ENCODE measurements at regions of chr16 and their contacts with region 1.

Region 1: GRCh38 chr16:82263521-82264143 is 93.6 kb upstream of the MPHOSPH6 start:
- DNase-seq: peak in 1 of 2 experiments; percentile 68
- H3K4me3 ChIP-seq: no peak overlapping the region
- H3K27ac ChIP-seq: no peak overlapping the region
- H3K4me1 ChIP-seq: no peaks in the 10 kb centered on the region
- H3K27me3 ChIP-seq: no peaks in the 10 kb centered on the region
- CTCF ChIP-seq: peak; percentile 81 to 93 (median 87)
- EP300 ChIP-seq: no peak
- POLR2A ChIP-seq: no peak
- RAD21 ChIP-seq: peak; percentile 96 to 97

Region 2: DNA sequence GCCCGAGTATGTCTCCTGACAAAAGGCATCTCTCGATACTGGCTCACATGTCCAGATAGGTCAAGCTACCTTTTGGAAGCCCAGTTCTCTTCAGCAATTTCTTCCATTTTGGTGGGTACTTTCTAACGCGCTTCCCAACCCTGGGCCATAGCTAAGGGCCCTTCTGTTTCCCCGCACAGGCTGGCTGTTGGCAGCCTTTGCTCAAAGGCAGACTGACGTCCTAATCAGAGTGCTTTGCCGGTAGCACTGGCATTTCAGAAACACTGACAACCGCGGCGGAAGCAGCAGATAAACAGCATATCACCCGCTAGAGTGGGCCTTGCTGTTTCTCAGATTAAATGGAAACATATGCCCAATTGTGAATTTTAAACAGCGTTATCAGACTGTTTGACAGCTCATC is 44.3 kb before region 1 on chr16:
- CTCF ChIA-PET with region 1: no interaction called
- POLR2A ChIA-PET with region 1: no interaction called
- DNase-seq: no peak
- H3K4me3 ChIP-seq: no peak overlapping the region
- H3K27ac ChIP-seq: no peak overlapping the region
- H3K4me1 ChIP-seq: no peaks in the 10 kb centered on the region
- H3K27me3 ChIP-seq: no peaks in the 10 kb centered on the region
- CTCF ChIP-seq: no peak
- EP300 ChIP-seq: no peak
- POLR2A ChIP-seq: no peak
- RAD21 ChIP-seq: no peak

Region 3: GRCh38 chr16:82242201-82242600 is 21.4 kb before region 1 on chr16:
- CTCF ChIA-PET with region 1: interaction called, 14 read pairs
- POLR2A ChIA-PET with region 1: no interaction called
- DNase-seq: no peak
- H3K4me3 ChIP-seq: no peak overlapping the region
- H3K27ac ChIP-seq: no peak overlapping the region
- H3K4me1 ChIP-seq: peaks cover 0 to 2% (median 0%) of the 10 kb centered on the region in 4 experiments; a peak in 1 of 7 replicates
- H3K27me3 ChIP-seq: no peaks in the 10 kb centered on the region
- CTCF ChIP-seq: no peak
- EP300 ChIP-seq: no peak
- POLR2A ChIP-seq: no peak
- RAD21 ChIP-seq: no peak

Region 4: GRCh38 chr16:82298472-82298871 is 34.8 kb after region 1 on chr16:
- CTCF ChIA-PET with region 1: interaction called, 13 read pairs
- POLR2A ChIA-PET with region 1: no interaction called
- DNase-seq: no peak
- H3K4me3 ChIP-seq: no peak overlapping the region
- H3K27ac ChIP-seq: no peak overlapping the region
- H3K4me1 ChIP-seq: no peaks in the 10 kb centered on the region
- H3K27me3 ChIP-seq: no peaks in the 10 kb centered on the region
- CTCF ChIP-seq: no peak
- EP300 ChIP-seq: no peak
- POLR2A ChIP-seq: no peak
- RAD21 ChIP-seq: no peak

Region 5: GRCh38 chr16:82344157-82344556 is 80.5 kb after region 1 on chr16:
- CTCF ChIA-PET with region 1: interaction called, 140 read pairs
- POLR2A ChIA-PET with region 1: interaction called, 3 read pairs
- DNase-seq: no peak
- H3K4me3 ChIP-seq: no peak overlapping the region
- H3K27ac ChIP-seq: no peak overlapping the region
- H3K4me1 ChIP-seq: no peaks in the 10 kb centered on the region; a peak in 1 of 7 replicates
- H3K27me3 ChIP-seq: no peaks in the 10 kb centered on the region
- CTCF ChIP-seq: peak; percentile 66 to 82 (median 80)
- EP300 ChIP-seq: no peak
- POLR2A ChIP-seq: no peak
- RAD21 ChIP-seq: peak; percentile 74 to 76

Region 6: GRCh38 chr16:82580298-82580890 is 316.8 kb after region 1 on chr16:
- CTCF ChIA-PET with region 1: interaction called, 28 read pairs
- POLR2A ChIA-PET with region 1: no interaction called
- DNase-seq: no peak
- H3K4me3 ChIP-seq: no peak overlapping the region
- H3K27ac ChIP-seq: no peak overlapping the region
- H3K4me1 ChIP-seq: no peaks in the 10 kb centered on the region
- H3K27me3 ChIP-seq: no peaks in the 10 kb centered on the region
- CTCF ChIP-seq: peak; percentile 35 to 63 (median 54)
- EP300 ChIP-seq: no peak
- POLR2A ChIP-seq: no peak
- RAD21 ChIP-seq: peak; percentile 72 to 80

Region 7: GRCh38 chr16:82639666-82640336 is 376.2 kb after region 1 on chr16:
- CTCF ChIA-PET with region 1: interaction called, 30 read pairs
- POLR2A ChIA-PET with region 1: interaction called, 3 read pairs
- DNase-seq: peak in 1 of 2 experiments; percentile 83
- H3K4me3 ChIP-seq: no peak overlapping the region
- H3K27ac ChIP-seq: no peak overlapping the region
- H3K4me1 ChIP-seq: peaks cover 2 to 5% (median 4%) of the 10 kb centered on the region in 4 experiments; a peak in 5 of 7 replicates
- H3K27me3 ChIP-seq: no peaks in the 10 kb centered on the region
- CTCF ChIP-seq: peak; percentile 81 to 98 (median 91)
- EP300 ChIP-seq: no peak
- POLR2A ChIP-seq: no peak
- RAD21 ChIP-seq: peak; percentile 75 to 80